ENCODE measurements at regions of chr10 and their contacts with region 1.

Region 1: DNA sequence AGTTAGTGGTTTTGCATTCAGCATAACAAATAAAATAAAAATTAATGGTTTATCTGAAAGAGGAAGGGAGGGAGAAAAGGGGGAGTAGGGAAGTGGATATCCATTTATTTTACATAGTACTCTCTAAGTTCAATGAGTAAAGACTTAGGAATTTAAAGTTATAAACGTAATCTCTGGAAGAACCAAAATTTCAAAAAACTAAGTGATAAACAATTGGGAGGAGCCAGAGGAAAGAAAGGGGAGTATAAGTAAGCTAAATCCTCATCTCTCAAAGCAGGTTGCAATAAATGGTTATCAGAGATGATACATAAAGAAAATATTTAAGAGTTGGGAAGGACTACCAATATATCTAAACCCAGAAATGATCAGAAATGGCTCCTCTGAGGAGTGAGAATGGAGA is 46.4 kb downstream of the ANK3 start:
- DNase-seq: no peak

Region 2: GRCh38 chr10:60237977-60238758 is 105.1 kb before region 1 on chr10:
- intact Hi-C with region 1: loop called (anchors 5 kb)
- DNase-seq: peak in 1 of 10 donors; percentile 15

Region 3: GRCh38 chr10:60271319-60272040 is 71.8 kb before region 1 on chr10:
- intact Hi-C with region 1: no loop called
- DNase-seq: no peak